Activated CD4-positive, alpha-beta memory T cell treated with anti-CD3 and anti-CD28 coated beads, Interleukin-2, amount 10 ng/mL, durations not matched to agents 7 days and 5 days (primary cell): ENCODE measurements at regions of chr3 and their contacts with region 1.

Region 1: DNA sequence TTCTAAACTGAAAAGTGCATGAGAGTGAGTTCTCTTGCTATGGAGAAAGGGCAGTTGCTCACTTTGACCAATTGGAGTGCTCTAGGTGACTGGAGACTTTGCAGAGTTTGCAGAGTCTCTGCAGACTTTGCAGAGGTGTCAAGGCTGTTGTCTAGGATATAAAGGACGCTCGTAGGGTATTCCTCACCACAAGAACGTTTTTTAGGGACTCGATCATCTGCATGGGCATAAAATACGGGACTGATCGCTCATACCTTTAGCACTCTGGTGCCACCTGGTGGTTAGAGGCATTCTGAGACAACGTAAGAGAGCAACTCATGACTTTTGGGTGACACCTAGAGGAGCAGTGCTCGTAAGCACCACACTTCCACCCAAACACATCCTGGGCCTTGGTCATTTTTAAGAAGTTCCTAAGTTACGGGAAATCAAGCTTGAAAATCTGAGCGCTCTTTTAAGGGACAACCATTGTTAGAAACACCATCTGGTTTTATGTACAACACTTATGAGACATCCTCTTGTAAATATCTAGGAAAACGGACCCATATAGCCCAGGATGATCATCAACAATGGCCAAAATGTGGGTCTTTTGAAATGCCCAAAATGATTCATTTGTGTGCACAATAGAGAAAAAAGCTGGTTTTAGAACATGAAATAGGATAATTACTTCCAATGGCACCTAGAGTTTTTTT is 51.6 kb upstream of the XCR1 start:
- DNase-seq: peak; percentile 91
- H3K4me3 Mint-ChIP-seq: no peak overlapping the region
- H3K27ac Mint-ChIP-seq: no peak overlapping the region
- H3K4me1 Mint-ChIP-seq: peaks cover 33% of the 10 kb centered on the region
- H3K27me3 Mint-ChIP-seq: peaks cover 27% of the 10 kb centered on the region

Region 2: DNA sequence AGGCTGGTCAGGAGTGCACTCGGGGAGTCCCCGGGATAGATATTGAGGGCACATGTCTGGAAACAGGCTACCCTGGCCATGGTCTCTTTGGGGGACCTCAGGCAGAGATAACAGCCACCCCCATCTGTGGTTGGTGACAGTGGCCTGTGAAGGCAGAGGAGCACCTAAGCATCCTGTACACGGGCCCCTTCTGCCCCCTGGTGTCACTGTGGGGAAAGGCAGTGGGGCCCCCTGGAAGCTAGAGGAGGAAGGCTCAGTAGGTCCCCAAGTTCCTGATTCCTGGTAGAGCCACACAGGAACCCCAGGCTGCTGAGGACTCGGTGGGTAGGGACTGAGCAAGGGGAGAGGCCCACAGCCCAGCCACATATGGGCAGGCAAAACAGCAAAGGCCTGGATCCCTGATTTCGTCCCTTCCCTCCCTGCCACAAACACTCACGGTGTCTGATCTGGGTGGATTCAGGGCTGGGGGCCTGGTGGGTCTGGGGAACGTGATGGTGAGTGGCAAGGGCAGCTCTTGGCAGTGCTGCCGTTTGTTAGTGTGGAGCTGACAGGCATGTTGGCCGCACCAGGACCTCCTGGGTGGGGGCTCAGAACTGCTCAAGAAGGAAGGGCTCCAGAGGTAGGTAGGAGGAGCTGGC is 149.7 kb before region 1 on chr3:
- CTCF ChIA-PET with region 1: interaction called, 232 read pairs
- POLR2A ChIA-PET with region 1: no interaction called
- DNase-seq: peak; percentile 71
- H3K4me3 Mint-ChIP-seq: no peak overlapping the region
- H3K27ac Mint-ChIP-seq: no peak overlapping the region
- H3K4me1 Mint-ChIP-seq: peaks cover 5% of the 10 kb centered on the region
- H3K27me3 Mint-ChIP-seq: no peaks in the 10 kb centered on the region

Region 3: GRCh38 chr3:45948311-45948781 is 130.5 kb before region 1 on chr3:
- CTCF ChIA-PET with region 1: interaction called, 94 read pairs
- POLR2A ChIA-PET with region 1: interaction called, 23 read pairs
- DNase-seq: no peak
- H3K4me3 Mint-ChIP-seq: peak overlapping the region; percentile 58
- H3K27ac Mint-ChIP-seq: peak overlapping the region; percentile 90
- H3K4me1 Mint-ChIP-seq: peaks cover 92% of the 10 kb centered on the region
- H3K27me3 Mint-ChIP-seq: no peaks in the 10 kb centered on the region

Region 4: DNA sequence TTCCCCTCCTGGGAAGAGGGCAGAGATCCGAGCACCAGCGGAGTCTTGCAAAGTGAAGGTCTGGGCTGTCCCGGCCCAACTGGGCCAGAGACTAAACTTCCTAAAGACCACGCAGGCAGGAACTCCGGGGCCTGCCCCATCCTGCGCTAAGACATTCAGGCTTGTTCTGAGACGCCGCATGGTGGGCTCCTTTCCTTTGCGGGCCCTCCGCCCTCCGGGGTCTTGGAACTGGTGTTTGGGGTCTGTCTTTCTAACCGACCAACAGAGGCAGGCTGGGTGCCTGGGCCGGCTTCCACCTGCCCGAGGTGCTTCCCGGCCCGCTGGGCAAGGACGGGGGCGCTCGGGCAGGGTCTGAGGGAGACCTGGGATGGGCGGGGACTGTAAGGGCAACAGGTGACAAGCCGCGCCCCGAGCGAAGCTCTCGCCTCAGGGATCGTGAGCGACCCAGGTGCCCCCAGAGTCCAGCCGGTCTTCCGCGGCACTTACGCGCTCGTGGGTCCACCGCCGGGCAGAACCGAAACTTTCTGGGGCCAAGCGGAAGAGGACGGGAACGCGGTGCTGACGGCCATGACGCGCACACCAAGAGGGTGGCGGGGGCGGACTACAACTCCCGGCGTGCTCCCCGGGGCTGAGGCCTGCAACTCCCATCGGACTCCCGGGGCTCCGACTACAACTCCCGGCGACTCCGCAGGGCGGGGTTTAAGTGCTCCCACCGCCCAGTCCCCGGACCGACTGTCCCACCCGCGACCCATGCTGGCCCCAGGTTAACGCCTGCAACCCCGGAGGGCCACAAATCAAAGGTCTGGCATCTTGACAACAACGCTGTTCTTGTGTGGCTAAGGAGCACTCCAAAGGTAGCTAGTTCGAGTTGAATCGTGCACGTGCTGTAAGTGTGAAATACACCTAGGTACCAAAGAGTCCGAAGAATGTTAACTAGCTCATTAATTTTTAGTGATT is 83.3 kb before region 1 on chr3 and contains the start of gene FYCO1:
- CTCF ChIA-PET with region 1: interaction called, 5 read pairs
- POLR2A ChIA-PET with region 1: interaction called, 12 read pairs
- DNase-seq: peak; percentile 91
- H3K4me3 Mint-ChIP-seq: peak within 1 kb of the TSS; percentile 84
- H3K27ac Mint-ChIP-seq: peak within 1 kb of the TSS; percentile 93
- H3K4me1 Mint-ChIP-seq: peaks cover 46% of the 10 kb centered on the region
- H3K27me3 Mint-ChIP-seq: peaks cover 8% of the 10 kb centered on the region
- total RNA-seq, gene FYCO1: 21.7 to 22.6 TPM

Region 5: DNA sequence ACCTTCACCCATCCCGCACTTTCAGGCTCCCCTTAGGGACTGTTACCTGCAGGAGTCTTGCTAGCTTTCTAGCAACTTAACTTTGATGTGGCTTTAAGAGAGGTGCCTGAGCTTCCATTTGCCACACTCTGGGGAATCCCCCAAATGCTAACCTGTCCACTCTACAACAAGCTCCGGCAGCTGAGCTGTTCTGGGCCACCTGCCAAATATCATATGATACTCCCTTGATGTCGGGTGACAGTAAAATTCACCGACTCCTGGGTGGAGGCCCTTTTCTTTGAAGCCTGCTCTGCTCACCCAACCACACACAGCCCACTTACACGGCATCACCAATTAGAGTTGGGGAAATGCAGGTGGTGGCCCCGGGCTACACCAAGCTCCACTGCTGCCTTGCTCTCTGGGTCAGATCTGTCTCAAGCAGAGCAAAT is 13.5 kb before region 1 on chr3:
- CTCF ChIA-PET with region 1: interaction called, 32 read pairs
- POLR2A ChIA-PET with region 1: interaction called, 3 read pairs
- DNase-seq: peak; percentile 52
- H3K4me3 Mint-ChIP-seq: no peak overlapping the region
- H3K27ac Mint-ChIP-seq: no peak overlapping the region
- H3K4me1 Mint-ChIP-seq: peaks cover 49% of the 10 kb centered on the region
- H3K27me3 Mint-ChIP-seq: peaks cover 33% of the 10 kb centered on the region

Region 6: DNA sequence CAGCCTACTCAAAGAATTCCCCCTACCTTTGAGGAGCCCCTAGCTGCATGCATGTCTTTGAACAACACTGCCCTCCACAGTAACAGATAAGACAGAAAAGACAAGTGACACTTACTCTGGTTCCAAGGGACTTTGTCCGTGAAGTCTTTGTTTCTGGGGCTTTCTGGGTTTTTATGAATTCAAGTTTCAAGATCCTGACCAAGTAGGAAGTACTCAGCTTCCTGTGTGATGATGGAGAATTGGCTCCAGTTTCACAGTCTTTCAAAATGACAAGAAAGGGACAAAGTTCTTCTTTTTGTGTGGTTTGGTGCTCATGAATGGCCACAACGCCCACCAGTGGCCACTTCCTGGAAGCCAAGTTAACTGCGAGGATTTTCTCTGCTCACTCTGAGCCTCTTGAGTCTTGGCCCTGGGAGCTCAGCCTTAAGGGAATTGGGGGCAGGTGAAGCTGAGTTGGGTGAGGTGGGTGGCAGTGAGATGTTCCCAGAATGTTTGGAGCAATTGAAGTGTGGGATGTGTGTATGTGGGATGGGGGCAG is 129.4 kb after region 1 on chr3 and contains the start of gene CCR1:
- CTCF ChIA-PET with region 1: interaction called, 14 read pairs
- POLR2A ChIA-PET with region 1: interaction called, 4 read pairs
- DNase-seq: peak; percentile 78
- H3K4me3 Mint-ChIP-seq: peak within 1 kb of the TSS; percentile 71
- H3K27ac Mint-ChIP-seq: peak within 1 kb of the TSS; percentile 75
- H3K4me1 Mint-ChIP-seq: peaks cover 54% of the 10 kb centered on the region
- H3K27me3 Mint-ChIP-seq: no peaks in the 10 kb centered on the region
- total RNA-seq, gene CCR1: 20.0 to 20.7 TPM

Region 7: DNA sequence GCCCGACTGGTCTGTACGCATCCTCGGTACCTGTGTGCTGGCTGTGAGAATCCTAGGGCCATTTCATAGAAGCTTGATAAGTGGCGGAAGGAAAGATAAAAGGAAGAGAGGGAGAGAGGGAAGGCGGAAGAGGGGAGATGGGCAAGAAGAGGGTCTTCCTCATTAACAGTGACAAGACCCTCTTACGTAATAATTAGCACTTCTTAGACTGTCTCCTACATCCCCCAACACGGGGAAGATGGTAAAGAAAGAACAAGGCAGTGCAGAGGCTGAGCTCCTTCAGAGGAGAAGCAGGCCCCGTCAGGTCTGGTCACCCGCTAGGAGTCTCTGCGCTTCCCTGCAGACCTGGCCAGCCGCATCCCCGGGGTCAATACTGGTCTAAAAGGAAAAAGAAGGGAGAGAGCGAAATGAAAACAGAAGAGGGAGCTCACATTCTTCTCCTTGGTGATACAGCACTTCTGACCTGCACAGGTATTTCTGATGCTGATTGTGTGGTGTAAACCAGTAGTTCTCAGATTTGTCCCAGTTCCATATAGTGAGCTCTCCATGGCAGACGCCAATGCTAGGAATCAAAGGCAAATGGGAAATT is 514.5 kb after region 1 on chr3:
- CTCF ChIA-PET with region 1: no interaction called
- POLR2A ChIA-PET with region 1: no interaction called
- DNase-seq: no peak
- H3K4me3 Mint-ChIP-seq: no peak overlapping the region
- H3K27ac Mint-ChIP-seq: no peak overlapping the region
- H3K4me1 Mint-ChIP-seq: no peaks in the 10 kb centered on the region
- H3K27me3 Mint-ChIP-seq: peaks cover 33% of the 10 kb centered on the region

Region 8: GRCh38 chr3:46695177-46695961 is 616.5 kb after region 1 on chr3:
- CTCF ChIA-PET with region 1: no interaction called
- POLR2A ChIA-PET with region 1: no interaction called
- DNase-seq: peak; percentile 54
- H3K4me3 Mint-ChIP-seq: peak overlapping the region; percentile 24
- H3K27ac Mint-ChIP-seq: peak overlapping the region; percentile 77
- H3K4me1 Mint-ChIP-seq: peaks cover 40% of the 10 kb centered on the region
- H3K27me3 Mint-ChIP-seq: peaks cover 28% of the 10 kb centered on the region